ENCODE measurements at regions of chr1 and their contacts with region 1.

Region 1: GRCh38 chr1:170309389-170310013 is 163.7 kb downstream of the NTMT2 start:
- DNase-seq: peak in 1 of 2 donors; percentile 75
- H3K4me3 ChIP-seq: no peak overlapping the region
- H3K27ac ChIP-seq: peak overlapping the region; percentile 44 to 50
- H3K4me1 ChIP-seq: peaks cover 0 to 26% of the 10 kb centered on the region in 2 donors
- H3K27me3 ChIP-seq: no peaks in the 10 kb centered on the region
- CTCF ChIP-seq: no peak

Region 2: DNA sequence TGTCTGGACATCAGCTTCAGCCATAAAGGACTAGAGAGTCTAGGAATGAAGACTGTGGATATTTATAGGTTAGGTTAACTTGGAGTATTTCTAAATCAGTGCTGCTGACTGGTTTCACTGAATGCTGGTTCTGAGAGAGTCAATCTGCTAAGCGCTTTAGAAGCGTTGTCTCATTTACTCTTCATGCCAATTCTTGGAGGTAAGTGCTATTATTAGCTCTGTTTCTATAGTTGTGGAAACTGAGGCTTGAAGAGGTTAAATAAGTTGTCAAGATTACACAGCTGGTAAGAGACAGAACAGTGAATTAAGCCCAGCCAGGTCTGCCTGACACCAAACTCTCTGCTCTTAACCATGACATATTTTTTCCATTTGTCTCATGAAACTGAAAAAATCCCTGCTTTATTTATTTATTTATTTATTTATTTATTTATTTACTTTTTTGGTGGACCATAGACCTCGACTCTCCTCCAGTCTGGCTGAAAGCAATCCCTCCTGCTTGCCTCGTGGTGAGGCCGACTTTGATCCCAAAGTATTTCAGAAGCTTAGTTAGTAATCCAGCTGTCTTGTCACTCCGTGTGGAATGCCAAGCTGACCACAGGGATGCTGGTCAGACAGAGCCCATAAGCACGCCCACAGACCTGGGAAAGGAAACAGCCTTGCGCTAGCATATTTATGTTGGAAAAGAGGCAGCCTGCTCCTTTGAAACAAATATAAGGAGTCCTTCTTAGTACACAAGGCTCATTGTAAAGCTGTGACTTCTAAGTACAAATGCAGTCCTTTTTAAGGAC is 146.8 kb before region 1 on chr1:
- intact Hi-C with region 1: loop called (anchors 5 kb)
- DNase-seq: peak in 1 of 2 donors; percentile 65
- H3K4me3 ChIP-seq: peak overlapping the region in 1 of 2 donors; percentile 34
- H3K27ac ChIP-seq: peak overlapping the region in 1 of 2 donors; percentile 23
- H3K4me1 ChIP-seq: peaks cover 0 to 16% of the 10 kb centered on the region in 2 donors
- H3K27me3 ChIP-seq: no peaks in the 10 kb centered on the region
- CTCF ChIP-seq: no peak

Region 3: GRCh38 chr1:170221031-170221430 is 88.5 kb before region 1 on chr1:
- intact Hi-C with region 1: loop called (anchors 5 kb)
- DNase-seq: peak in 1 of 2 donors; percentile 77
- H3K4me3 ChIP-seq: no peak overlapping the region
- H3K27ac ChIP-seq: peak overlapping the region; percentile 26 to 40
- H3K4me1 ChIP-seq: peaks cover under 1 to 9% of the 10 kb centered on the region in 2 donors
- H3K27me3 ChIP-seq: no peaks in the 10 kb centered on the region
- CTCF ChIP-seq: no peak

Region 4: GRCh38 chr1:170267316-170267715 is 42.2 kb before region 1 on chr1:
- intact Hi-C with region 1: no loop called
- DNase-seq: no peak
- H3K4me3 ChIP-seq: no peak overlapping the region
- H3K27ac ChIP-seq: no peak overlapping the region
- H3K4me1 ChIP-seq: peaks cover 0 to 1% of the 10 kb centered on the region in 2 donors
- H3K27me3 ChIP-seq: no peaks in the 10 kb centered on the region
- CTCF ChIP-seq: no peak

Region 5: GRCh38 chr1:170410401-170411166 is 101.1 kb after region 1 on chr1:
- intact Hi-C with region 1: loop called (anchors 5 kb)
- DNase-seq: no peak
- H3K4me3 ChIP-seq: no peak overlapping the region
- H3K27ac ChIP-seq: peak overlapping the region; percentile 85 to 90
- H3K4me1 ChIP-seq: peaks cover 3 to 27% of the 10 kb centered on the region in 2 donors
- H3K27me3 ChIP-seq: no peaks in the 10 kb centered on the region
- CTCF ChIP-seq: no peak

Measured in ascending aorta (tissue), 2 donors.